Prostate gland (tissue), 2 donors: ENCODE measurements at regions of chr19 and their contacts with region 1.

Region 1: DNA sequence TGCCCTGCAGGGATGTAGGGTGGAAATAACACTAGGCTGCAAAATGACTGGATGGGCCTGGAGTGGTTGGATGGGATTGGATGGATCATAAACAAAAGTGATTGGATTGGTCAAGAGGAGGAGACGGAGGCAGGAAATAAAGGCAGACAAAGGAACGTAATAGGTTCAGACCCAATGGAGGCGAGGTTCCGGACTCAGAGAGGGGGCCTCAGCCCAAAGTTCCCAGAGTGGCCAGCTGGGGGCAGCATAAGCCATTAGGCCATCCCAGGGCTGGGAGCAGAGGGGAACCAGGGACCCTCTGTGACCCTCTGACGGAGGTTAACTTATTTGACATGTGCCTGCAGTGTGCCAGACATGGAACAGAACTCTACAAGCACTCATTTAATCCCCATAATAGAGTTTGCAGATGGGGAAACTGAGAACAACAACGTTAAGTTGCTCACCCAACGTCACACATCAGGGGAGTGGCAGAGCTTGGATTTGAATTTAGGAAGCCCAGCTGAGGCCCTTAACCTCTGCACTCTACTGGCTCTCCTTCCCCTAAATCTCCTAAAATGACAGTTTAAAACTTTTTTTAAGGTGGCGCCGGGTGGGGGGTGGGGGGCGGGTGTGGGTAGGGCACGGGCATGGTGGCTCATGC is 15.3 kb upstream of the MAP1S start:
- DNase-seq: no peak
- H3K4me3 ChIP-seq: no peak overlapping the region
- H3K27ac ChIP-seq: no peak overlapping the region
- H3K4me1 ChIP-seq: no peaks in the 10 kb centered on the region
- H3K27me3 ChIP-seq: no peaks in the 10 kb centered on the region
- CTCF ChIP-seq: peak in 3 of 4 experiments; percentile 49 to 75 (median 59)
- POLR2A ChIP-seq: no peak

Region 2: DNA sequence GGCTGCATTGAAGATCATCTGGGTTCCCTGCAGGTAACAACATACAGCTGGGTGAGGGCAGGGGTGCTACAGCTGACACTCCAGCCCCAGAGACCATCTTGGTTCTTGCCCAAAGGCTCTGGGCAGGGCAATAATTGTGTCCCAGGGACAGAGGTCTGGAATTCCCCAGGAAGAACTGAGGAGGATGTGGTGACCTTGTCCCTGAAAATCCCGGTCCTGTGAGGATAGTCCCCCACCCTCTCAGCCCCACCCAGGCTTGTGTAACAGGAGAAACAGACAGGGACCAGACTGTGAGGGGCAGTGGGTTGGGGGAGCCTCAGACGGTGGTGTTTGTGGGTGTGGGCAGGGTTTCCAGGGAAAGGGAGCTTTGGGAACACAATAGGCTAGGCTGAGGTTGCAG is 85.0 kb before region 1 on chr19:
- intact Hi-C with region 1: no loop called
- DNase-seq: no peak
- H3K4me3 ChIP-seq: no peak overlapping the region
- H3K27ac ChIP-seq: no peak overlapping the region
- H3K4me1 ChIP-seq: no peaks in the 10 kb centered on the region
- H3K27me3 ChIP-seq: peaks cover 5% of the 10 kb centered on the region
- CTCF ChIP-seq: no peak
- POLR2A ChIP-seq: no peak

Region 3: GRCh38 chr19:17794731-17795536 is 91.0 kb after region 1 on chr19 and contains the start of gene B3GNT3:
- intact Hi-C with region 1: no loop called
- DNase-seq: peak; percentile 30
- H3K4me3 ChIP-seq: peak within 1 kb of the TSS in 1 of 2 donors; percentile 20
- H3K27ac ChIP-seq: peak within 1 kb of the TSS in 1 of 2 donors; percentile 65
- H3K4me1 ChIP-seq: no peaks in the 10 kb centered on the region
- H3K27me3 ChIP-seq: no peaks in the 10 kb centered on the region
- CTCF ChIP-seq: no peak
- POLR2A ChIP-seq: peak; percentile 76
- total RNA-seq, gene B3GNT3: 5.2 to 11.9 TPM

Region 4: GRCh38 chr19:17859533-17860330 is 155.8 kb after region 1 on chr19 and contains the start of gene RPL18A:
- intact Hi-C with region 1: loop called (anchors 10 kb)
- DNase-seq: peak; percentile 99
- H3K4me3 ChIP-seq: peak within 1 kb of the TSS; percentile 53 to 92
- H3K27ac ChIP-seq: peak within 1 kb of the TSS; percentile 69 to 85
- H3K4me1 ChIP-seq: peaks cover 6% of the 10 kb centered on the region
- H3K27me3 ChIP-seq: no peaks in the 10 kb centered on the region
- CTCF ChIP-seq: peak; percentile 77 to 98 (median 92)
- POLR2A ChIP-seq: peak; percentile 86
- total RNA-seq, gene RPL18A: 1,351 to 1,892 TPM